ENCODE measurements at regions of chr5 and their contacts with region 1.

Region 1: DNA sequence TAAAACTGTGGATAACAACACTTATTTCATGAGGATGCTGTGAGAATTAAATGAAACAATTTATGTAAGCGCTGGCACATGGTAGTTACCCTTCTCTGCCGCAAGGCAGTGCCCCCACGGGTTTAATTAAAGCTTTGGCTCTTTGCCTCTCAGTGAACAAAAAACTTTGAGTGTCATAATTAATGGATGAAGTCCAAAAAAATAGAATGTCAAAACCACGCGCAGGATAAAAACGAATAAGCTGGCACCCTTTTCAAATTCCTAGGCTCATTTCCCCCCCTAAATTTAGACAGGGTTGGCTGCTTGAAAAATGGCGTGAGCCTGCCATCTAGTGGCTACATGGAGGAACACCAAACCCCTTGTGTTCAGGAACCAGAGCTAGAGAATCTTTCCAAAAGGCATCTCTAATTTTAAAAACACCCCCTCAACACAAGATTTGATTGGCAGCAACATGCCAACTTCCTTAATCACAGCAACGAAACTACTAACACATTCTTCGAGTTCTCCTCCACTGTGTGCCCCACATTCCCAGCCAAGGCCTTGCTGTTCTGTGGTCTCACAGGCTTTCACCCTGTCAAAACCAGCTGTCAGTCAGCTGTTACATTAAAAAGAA is 29.0 kb upstream of the CCNG1 start:
- DNase-seq: peak; percentile 48 to 61 (median 51)
- H3K4me3 ChIP-seq: no peak overlapping the region
- H3K4me3 Mint-ChIP-seq: peak overlapping the region in 2 of 8 donors; percentile 13 to 58
- H3K27ac ChIP-seq: no peak overlapping the region
- H3K27ac Mint-ChIP-seq: peak overlapping the region in 1 of 7 donors; percentile 19
- H3K4me1 ChIP-seq: no peaks in the 10 kb centered on the region
- H3K4me1 Mint-ChIP-seq: peaks cover 0 to 5% (median 3%) of the 10 kb centered on the region in 4 donors
- H3K27me3 ChIP-seq: no peaks in the 10 kb centered on the region
- H3K27me3 Mint-ChIP-seq: peaks cover 6 to 11% of the 10 kb centered on the region in 2 donors

Region 2: DNA sequence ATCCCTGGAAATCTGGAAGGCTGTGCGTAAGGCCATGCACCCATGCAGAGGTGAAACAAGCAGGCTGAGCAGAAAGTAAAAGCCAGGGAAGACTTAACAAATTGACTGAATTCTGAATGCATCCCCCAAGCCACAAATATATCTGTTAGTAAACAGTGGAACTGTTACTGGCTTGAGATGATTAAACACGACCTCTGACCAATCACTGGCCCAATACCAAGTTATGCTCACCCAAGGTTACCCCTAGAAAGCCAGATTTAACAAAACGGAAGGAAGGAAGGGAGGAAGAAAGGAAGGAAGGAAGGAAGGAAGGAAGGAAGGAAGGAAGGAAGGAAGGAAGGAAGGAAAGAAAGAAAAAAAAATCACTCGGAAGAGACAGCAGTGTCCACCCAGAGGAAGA is 186.8 kb before region 1 on chr5:
- CTCF ChIA-PET with region 1: no interaction called
- POLR2A ChIA-PET with region 1: no interaction called
- intact Hi-C with region 1: no loop called
- DNase-seq: no peak
- H3K4me3 ChIP-seq: no peak overlapping the region
- H3K4me3 Mint-ChIP-seq: no peak overlapping the region
- H3K27ac ChIP-seq: no peak overlapping the region
- H3K27ac Mint-ChIP-seq: no peak overlapping the region
- H3K4me1 ChIP-seq: no peaks in the 10 kb centered on the region
- H3K4me1 Mint-ChIP-seq: no peaks in the 10 kb centered on the region
- H3K27me3 ChIP-seq: no peaks in the 10 kb centered on the region
- H3K27me3 Mint-ChIP-seq: no peaks in the 10 kb centered on the region

Region 3: DNA sequence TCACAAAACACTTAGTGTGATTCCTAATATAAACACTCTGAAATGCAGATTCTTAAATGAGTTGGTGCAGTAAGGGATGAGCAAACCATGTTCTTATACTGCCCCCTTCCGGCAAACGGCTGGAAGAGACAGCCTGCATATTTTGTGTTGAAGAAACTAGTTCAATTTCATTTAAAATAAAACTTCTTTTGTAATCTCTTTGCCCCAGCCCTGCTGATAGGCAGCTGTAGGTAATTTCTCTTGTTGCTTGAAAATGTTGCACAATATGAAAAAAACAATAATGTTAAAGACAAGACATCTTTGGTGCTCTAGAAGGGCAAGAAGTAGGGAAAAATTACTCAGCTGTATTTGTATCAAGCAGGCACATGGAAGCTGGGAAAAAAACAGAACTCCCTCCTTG is 60.7 kb before region 1 on chr5:
- CTCF ChIA-PET with region 1: interaction called, 10 read pairs
- POLR2A ChIA-PET with region 1: no interaction called
- intact Hi-C with region 1: no loop called
- DNase-seq: peak in 4 of 5 donors; percentile 37 to 46 (median 40)
- H3K4me3 ChIP-seq: no peak overlapping the region
- H3K4me3 Mint-ChIP-seq: no peak overlapping the region
- H3K27ac ChIP-seq: no peak overlapping the region
- H3K27ac Mint-ChIP-seq: no peak overlapping the region
- H3K4me1 ChIP-seq: no peaks in the 10 kb centered on the region
- H3K4me1 Mint-ChIP-seq: no peaks in the 10 kb centered on the region
- H3K27me3 ChIP-seq: no peaks in the 10 kb centered on the region
- H3K27me3 Mint-ChIP-seq: peaks cover 7 to 9% of the 10 kb centered on the region in 2 donors

Region 4: DNA sequence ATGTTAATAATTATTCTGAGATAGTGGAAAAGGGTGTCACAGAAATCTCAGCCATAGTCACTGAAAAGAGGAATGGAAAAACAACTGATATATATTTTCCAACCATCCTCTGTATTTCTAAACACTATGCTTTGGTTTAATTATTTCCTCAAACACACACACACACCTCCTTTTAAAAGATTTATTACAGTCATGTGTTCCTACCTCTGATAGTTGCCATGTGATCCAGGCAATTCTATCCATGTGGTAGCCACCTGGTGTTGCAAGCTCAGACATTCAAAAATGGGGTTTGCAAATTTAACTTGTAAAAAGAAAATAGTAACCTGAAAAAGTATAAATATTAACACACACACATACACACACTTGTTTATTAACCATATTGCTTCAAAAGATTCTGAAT is 11.1 kb before region 1 on chr5:
- CTCF ChIA-PET with region 1: interaction called, 17 read pairs
- POLR2A ChIA-PET with region 1: no interaction called
- intact Hi-C with region 1: no loop called
- DNase-seq: no peak
- H3K4me3 ChIP-seq: no peak overlapping the region
- H3K4me3 Mint-ChIP-seq: no peak overlapping the region
- H3K27ac ChIP-seq: no peak overlapping the region
- H3K27ac Mint-ChIP-seq: no peak overlapping the region
- H3K4me1 ChIP-seq: no peaks in the 10 kb centered on the region
- H3K4me1 Mint-ChIP-seq: no peaks in the 10 kb centered on the region
- H3K27me3 ChIP-seq: no peaks in the 10 kb centered on the region
- H3K27me3 Mint-ChIP-seq: peaks cover 11 to 15% of the 10 kb centered on the region in 2 donors

Region 5: DNA sequence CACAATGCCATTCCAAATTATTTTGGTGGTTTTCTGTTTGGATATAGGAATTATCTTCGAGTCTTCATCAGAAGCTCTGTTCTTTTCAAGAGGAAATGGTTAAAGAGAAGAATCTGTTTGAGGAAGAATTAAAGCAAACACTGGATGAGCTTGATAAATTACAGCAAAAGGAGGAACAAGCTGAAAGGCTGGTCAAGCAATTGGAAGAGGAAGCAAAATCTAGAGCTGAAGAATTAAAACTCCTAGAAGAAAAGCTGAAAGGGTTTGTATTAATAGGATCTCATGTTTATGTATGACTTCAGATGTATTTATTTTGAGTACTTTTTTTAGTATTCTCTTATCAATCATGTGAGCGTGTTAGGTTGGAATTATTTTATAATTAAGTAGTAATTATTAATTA is 67.0 kb after region 1 on chr5:
- CTCF ChIA-PET with region 1: no interaction called
- POLR2A ChIA-PET with region 1: no interaction called
- intact Hi-C with region 1: no loop called
- DNase-seq: no peak
- H3K4me3 ChIP-seq: no peak overlapping the region
- H3K4me3 Mint-ChIP-seq: no peak overlapping the region
- H3K27ac ChIP-seq: no peak overlapping the region
- H3K27ac Mint-ChIP-seq: no peak overlapping the region
- H3K4me1 ChIP-seq: no peaks in the 10 kb centered on the region
- H3K4me1 Mint-ChIP-seq: peaks cover 2 to 9% (median 7%) of the 10 kb centered on the region in 4 donors
- H3K27me3 ChIP-seq: no peaks in the 10 kb centered on the region
- H3K27me3 Mint-ChIP-seq: no peaks in the 10 kb centered on the region

Region 6: DNA sequence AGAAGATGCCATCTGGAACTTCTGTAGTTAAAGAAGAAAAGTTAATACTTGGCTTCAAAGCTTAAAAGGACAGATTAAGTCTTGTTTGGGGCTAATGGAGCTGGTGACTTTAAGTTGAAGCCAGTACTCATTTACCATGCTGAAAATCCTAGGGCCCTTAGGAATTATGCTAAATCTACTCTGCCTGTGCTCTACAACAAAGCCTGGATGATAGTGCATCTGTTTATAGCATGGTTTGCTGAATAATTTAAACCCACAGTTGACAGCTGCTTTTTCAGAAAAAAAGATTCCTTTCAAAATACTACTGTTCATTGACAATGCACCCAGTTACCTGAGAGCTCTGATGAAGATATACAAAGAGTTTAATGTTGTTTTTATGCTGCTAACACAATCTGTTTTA is 490.5 kb after region 1 on chr5:
- CTCF ChIA-PET with region 1: no interaction called
- POLR2A ChIA-PET with region 1: no interaction called
- intact Hi-C with region 1: no loop called
- DNase-seq: no peak
- H3K4me3 ChIP-seq: no peak overlapping the region
- H3K4me3 Mint-ChIP-seq: no peak overlapping the region
- H3K27ac ChIP-seq: no peak overlapping the region
- H3K27ac Mint-ChIP-seq: no peak overlapping the region
- H3K4me1 ChIP-seq: no peaks in the 10 kb centered on the region
- H3K4me1 Mint-ChIP-seq: no peaks in the 10 kb centered on the region
- H3K27me3 ChIP-seq: no peaks in the 10 kb centered on the region
- H3K27me3 Mint-ChIP-seq: no peaks in the 10 kb centered on the region